Cardiac septum (tissue), 1 donor: ENCODE measurements at regions of chr2 and their contacts with region 1.

Region 1: DNA sequence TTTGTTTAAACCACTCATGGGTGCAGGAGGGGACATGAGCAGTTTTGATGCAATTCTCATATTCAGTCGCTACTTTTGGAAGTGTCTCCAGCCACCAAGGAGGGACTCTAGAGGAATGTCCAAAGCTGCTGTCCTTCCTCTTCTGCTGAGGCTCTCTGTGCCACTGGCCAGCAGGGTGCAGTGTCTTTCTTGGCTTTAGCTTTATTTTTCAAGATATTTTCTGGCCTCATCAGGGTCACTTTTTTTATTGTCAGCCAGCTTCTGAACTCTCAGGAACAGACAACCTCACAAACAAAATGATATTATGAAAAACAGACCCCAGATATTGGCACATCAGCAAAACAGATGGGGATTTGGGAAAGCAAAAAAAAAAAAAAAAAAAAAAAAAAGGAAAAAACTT is 289.3 kb upstream of the ZSWIM2 start:
- DNase-seq: no peak

Region 2: GRCh38 chr2:186868344-186868743 is 269.9 kb before region 1 on chr2:
- intact Hi-C with region 1: loop called (anchors 5 kb)
- DNase-seq: no peak

Region 3: DNA sequence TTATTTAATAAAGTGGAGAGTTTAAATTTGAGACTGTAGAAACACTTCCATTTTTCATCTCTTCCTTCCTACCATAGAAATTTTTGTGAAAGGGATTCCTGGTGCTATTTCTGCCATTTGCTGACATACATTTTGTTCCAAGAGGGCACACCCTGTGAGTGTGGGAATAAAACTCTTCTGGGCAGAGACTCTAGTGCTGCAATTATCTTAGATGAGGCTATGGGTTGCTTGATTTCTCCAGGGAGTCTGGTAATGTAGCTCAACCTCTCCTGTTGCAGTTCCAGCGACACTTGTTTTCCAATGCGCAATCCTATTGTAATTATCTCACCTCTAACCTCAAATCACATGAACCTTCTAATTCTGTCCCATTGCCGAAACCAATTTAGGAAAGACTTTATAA is 229.2 kb before region 1 on chr2:
- intact Hi-C with region 1: loop called (anchors 5 kb)
- DNase-seq: no peak